ENCODE measurements at regions of chr21 and their contacts with region 1.

Region 1: DNA sequence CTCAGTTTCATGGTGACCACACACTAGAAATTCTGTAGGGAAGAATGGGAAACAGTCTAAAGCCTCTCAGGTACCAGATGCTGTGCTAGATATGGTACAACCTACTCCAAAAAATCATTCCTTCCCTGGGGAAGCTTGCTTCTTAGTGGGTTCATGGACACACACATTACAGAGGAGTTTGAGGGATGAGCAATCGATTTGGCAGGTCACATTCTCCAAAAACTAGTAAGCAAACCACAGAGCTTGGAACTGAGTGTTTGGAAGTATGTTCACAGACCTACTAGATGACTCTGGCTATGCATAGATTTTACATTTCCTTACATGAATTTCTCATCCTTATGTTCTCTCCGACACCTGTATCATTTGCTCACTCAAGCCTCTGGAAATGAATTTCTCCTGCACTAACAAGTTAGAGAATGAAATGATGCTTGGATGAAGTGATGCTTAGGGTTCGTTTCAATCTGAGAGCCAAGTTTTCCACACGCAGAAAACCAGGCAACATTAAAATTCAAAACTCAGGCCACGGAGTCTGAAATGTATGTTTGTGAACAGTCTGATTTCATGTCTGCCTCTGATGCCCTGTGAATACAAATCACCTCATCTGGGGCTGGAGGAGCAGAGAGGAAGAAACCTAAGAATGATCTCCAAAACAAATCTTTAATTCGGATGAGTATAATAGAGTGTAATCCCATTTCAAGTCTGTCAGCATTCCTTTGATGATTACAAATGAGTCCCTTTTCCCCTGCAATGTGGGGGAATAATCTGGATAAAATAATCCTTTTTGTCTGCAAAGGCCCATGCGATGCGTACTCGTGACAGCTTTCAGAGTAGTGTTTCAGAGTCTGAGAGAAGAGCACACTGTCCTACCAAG is 11.0 kb downstream of the EVA1C start:
- DNase-seq: no peak
- ATAC-seq: no peak
- H3K4me3 ChIP-seq: no peak overlapping the region
- H3K27ac ChIP-seq: no peak overlapping the region
- H3K4me1 ChIP-seq: peaks cover 0 to 54% (median 33%) of the 10 kb centered on the region in 9 donors
- H3K27me3 ChIP-seq: no peaks in the 10 kb centered on the region
- CTCF ChIP-seq: no peak

Region 2: DNA sequence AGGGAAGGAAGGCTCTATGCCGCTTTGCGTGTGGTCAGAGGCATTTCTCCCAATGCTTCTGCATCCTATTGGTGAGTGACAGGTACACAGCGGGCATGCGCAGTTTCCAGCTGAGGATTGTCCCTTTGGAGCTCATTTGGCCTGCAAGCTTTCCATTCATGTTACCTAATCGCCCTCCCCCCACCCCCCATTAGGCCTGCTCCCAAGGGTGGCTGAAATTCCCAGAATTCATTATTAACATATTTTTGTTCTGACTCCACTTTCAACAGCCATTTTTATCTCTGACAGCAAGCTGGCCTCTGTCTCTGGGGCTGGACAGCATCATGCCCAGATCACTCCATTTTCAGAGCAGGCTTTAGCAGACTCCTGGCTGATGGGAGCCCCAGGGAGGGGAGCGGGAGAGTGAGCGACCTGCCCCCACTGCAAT is 170.3 kb before region 1 on chr21:
- intact Hi-C with region 1: no loop called
- DNase-seq: peak; percentile 36 to 61
- ATAC-seq: peak; percentile 71 to 89 (median 80)
- H3K4me3 ChIP-seq: no peak overlapping the region
- H3K27ac ChIP-seq: peak overlapping the region in 4 of 10 donors; percentile 51 to 71 (median 56)
- H3K4me1 ChIP-seq: peaks cover 7 to 44% (median 26%) of the 10 kb centered on the region in 9 donors
- H3K27me3 ChIP-seq: no peaks in the 10 kb centered on the region
- CTCF ChIP-seq: no peak

Region 3: GRCh38 chr21:32442566-32443318 is 19.2 kb after region 1 on chr21:
- intact Hi-C with region 1: loop called in 1 of 10 experiments (anchors 1 kb)
- DNase-seq: no peak
- ATAC-seq: peak in 4 of 8 donors; percentile 10 to 36 (median 18)
- H3K4me3 ChIP-seq: no peak overlapping the region
- H3K27ac ChIP-seq: peak overlapping the region in 3 of 10 donors; percentile 49 to 56 (median 52)
- H3K4me1 ChIP-seq: peaks cover 0 to 27% (median 7%) of the 10 kb centered on the region in 9 donors
- H3K27me3 ChIP-seq: no peaks in the 10 kb centered on the region
- CTCF ChIP-seq: no peak

Region 4: DNA sequence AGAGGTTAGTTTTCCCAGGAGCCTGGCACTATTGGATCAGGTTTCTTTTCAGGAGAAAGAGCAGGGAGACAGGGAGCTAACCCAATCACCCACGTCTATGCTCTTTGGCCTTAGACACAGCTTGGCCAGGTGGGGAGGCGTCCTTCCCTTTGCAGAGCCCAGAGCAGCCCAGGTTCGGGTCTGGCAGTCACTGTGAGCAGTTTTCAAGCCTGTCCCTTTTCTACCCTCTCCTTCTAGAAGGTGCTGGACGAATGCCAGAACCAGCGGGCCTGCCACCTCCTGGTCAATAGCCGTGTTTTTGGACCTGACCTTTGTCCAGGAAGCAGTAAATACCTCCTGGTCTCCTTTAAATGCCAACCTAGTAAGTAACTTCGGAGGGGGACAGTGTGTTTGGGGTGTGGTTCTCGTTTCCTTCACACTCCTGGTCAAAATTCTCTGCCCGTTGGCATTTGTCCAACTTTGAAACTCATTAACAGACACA is 33.8 kb after region 1 on chr21:
- intact Hi-C with region 1: loop called in 3 of 10 experiments (anchors 5 kb)
- DNase-seq: peak; percentile 36 to 52
- ATAC-seq: peak in 7 of 8 donors; percentile 9 to 61 (median 32)
- H3K4me3 ChIP-seq: no peak overlapping the region
- H3K27ac ChIP-seq: peak overlapping the region; percentile 27 to 83 (median 64)
- H3K4me1 ChIP-seq: peaks cover 15 to 36% (median 22%) of the 10 kb centered on the region in 9 donors
- H3K27me3 ChIP-seq: no peaks in the 10 kb centered on the region
- CTCF ChIP-seq: peak in 5 of 9 donors; percentile 8 to 43 (median 34)

Region 5: DNA sequence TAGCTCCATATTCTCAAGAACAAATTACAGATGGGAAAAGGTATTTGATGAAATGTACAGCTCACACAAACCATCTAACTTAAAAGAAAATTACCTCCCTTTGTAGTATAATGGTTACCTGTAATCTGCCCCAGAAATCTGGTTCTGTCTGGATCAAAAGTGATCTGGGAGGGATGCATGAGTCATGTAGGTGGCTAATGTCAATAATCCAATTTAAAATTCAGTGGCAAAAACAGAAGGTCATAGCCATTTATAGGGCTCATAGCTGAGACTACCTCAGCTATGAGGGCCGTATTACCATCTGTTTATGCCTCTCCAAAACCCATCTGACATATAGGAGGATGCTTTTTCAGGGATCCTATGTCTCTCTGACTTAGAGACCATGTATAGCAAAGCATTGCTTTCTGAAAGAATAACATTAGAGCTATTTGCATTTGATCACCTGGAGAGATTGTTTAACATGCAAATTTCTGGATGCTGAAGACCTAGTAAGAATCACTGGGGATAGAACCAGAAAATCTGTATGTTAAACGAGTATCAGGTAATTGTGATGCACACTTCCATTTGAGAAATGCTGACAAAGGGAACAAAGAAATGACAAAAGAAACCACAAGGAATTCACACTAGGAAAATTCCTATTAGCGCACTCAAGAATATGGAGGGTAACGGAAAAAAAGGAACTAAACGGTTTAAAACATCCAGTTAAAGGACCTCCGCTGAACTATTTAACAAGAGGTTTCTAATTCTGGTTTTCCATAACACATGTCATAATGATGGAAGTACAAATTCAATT is 330.5 kb after region 1 on chr21:
- intact Hi-C with region 1: no loop called
- DNase-seq: no peak
- ATAC-seq: no peak
- H3K4me3 ChIP-seq: no peak overlapping the region
- H3K27ac ChIP-seq: no peak overlapping the region
- H3K4me1 ChIP-seq: no peaks in the 10 kb centered on the region
- H3K27me3 ChIP-seq: no peaks in the 10 kb centered on the region
- CTCF ChIP-seq: no peak

Measured in heart right ventricle (tissue), 16 donors.